ENCODE measurements at regions of chr16 and their contacts with region 1.

Region 1: GRCh38 chr16:77223184-77223583 is 24.0 kb downstream of the SYCE1L start:
- DNase-seq: peak; percentile 44
- H3K4me3 Mint-ChIP-seq: no peak overlapping the region
- H3K27ac Mint-ChIP-seq: no peak overlapping the region
- H3K4me1 Mint-ChIP-seq: no peaks in the 10 kb centered on the region
- H3K27me3 Mint-ChIP-seq: peaks cover 4% of the 10 kb centered on the region

Region 2: GRCh38 chr16:77211880-77212740 is 11.1 kb before region 1 on chr16:
- CTCF ChIA-PET with region 1: no interaction called
- POLR2A ChIA-PET with region 1: no interaction called
- DNase-seq: peak; percentile 75
- H3K4me3 Mint-ChIP-seq: peak overlapping the region; percentile 78
- H3K27ac Mint-ChIP-seq: peak overlapping the region; percentile 80
- H3K4me1 Mint-ChIP-seq: peaks cover 10% of the 10 kb centered on the region
- H3K27me3 Mint-ChIP-seq: no peaks in the 10 kb centered on the region

Region 3: DNA sequence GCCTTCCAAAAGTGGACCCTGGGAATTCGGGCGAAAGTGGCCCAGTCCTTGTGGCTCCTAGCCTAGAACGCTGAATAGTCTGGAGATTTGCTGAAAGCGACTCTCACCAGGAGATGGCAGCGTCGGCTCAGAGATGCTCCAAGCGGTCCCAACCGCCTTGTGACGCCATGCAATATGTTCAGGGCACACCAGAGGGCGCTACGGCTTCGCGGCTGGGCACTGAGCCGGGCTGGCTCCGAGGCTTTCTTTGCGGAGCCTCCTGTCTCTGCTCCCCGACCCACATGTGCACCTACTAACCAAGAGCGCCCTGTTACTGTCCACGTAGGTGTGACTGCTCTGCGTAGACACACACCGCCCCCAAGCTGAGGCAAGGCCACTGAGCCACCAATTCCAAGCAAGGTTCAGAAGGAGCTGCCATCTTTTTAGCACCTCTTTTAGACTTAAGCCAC is 12.9 kb after region 1 on chr16:
- CTCF ChIA-PET with region 1: interaction called, 10 read pairs
- POLR2A ChIA-PET with region 1: no interaction called
- DNase-seq: peak; percentile 90
- H3K4me3 Mint-ChIP-seq: peak overlapping the region; percentile 10
- H3K27ac Mint-ChIP-seq: no peak overlapping the region
- H3K4me1 Mint-ChIP-seq: peaks cover 5% of the 10 kb centered on the region
- H3K27me3 Mint-ChIP-seq: no peaks in the 10 kb centered on the region

Measured in activated CD4-positive, alpha-beta T cell treated with anti-CD3 and anti-CD28 coated beads, Interleukin-2, amount 10 ng/mL, durations not matched to agents 7 days and 5 days (primary cell).